Endothelial cell of umbilical vein (primary cell): ENCODE measurements at regions of chr4 and their contacts with region 1.

Region 1: GRCh38 chr4:139015269-139015947 is at the start of gene NOCT:
- DNase-seq: peak; percentile 88
- H3K4me3 ChIP-seq: peak within 1 kb of the TSS; percentile 90 to 100 (median 99)
- H3K27ac ChIP-seq: peak within 1 kb of the TSS; percentile 100
- H3K4me1 ChIP-seq: peaks cover 35% of the 10 kb centered on the region
- H3K27me3 ChIP-seq: no peaks in the 10 kb centered on the region
- CTCF ChIP-seq: peak in 1 of 2 donors; percentile 29
- POLR2A ChIP-seq: peak; percentile 90
- total RNA-seq, gene NOCT: 20.1 and 20.7 TPM in 2 replicates

Region 2: DNA sequence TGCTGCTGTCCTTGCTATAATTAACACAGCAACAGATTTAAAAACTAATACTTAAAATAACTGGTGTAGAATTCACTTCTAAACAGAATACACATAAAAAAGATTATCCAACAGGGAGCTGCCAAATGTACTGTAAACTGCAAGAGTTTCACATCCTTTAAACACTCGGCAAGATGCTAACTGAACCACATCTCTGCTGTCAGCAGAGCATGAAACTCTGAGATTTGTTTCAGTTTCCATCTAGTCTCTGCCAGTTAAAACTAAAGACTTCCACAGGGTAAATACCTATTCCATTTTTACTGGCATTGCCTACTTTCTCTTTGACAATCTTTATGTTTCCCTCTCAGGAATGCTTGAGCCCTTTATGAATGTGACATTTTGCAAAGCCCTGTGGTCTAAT is 901.0 kb before region 1 on chr4:
- CTCF ChIA-PET with region 1: no interaction called
- POLR2A ChIA-PET with region 1: no interaction called
- dilution Hi-C with region 1: no loop called
- intact Hi-C with region 1: loop called (anchors 10 kb)
- DNase-seq: peak; percentile 36
- H3K4me3 ChIP-seq: no peak overlapping the region
- H3K27ac ChIP-seq: peak overlapping the region; percentile 43
- H3K4me1 ChIP-seq: peaks cover 53% of the 10 kb centered on the region
- H3K27me3 ChIP-seq: no peaks in the 10 kb centered on the region
- CTCF ChIP-seq: no peak
- POLR2A ChIP-seq: no peak

Region 3: DNA sequence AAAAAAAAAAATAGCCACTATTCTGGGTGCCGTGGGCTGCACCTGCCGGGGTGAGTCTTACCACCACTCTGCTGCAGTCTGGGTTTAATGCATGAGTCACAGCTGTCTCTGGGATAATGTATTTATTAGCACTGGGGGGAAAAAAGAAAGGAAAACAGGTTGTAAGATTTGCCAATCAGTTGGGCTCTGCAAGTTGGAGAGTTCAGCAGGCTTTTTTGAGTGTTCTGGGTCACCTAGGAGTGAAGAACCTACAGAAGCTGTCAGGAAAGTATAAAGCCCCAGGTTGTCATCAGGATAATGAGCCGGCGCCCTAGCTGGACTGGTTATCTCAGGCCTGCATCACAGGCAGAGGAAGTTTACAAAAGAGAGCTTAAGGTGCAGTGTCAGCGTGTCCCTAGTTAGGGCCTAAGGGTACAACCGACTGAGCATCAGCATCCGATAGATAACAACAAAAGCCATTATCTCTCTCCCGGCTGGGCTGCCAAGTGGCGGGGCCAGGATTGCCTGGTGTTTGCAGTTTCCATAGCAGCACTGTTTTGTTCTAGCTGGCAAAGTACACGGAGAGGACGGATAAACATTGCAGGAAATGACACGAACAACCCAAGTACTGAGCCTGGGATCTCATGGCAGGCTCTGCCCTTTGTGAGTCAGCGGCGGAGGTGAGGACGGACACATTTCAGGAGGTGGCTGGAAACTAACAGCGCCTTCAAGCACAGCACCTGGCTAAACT is 104.6 kb before region 1 on chr4:
- CTCF ChIA-PET with region 1: no interaction called
- POLR2A ChIA-PET with region 1: no interaction called
- dilution Hi-C with region 1: no loop called
- intact Hi-C with region 1: loop called (anchors 1 kb)
- DNase-seq: peak; percentile 99
- H3K4me3 ChIP-seq: peak overlapping the region in 1 of 3 experiments; percentile 36
- H3K27ac ChIP-seq: peak overlapping the region; percentile 97
- H3K4me1 ChIP-seq: peaks cover 16% of the 10 kb centered on the region
- H3K27me3 ChIP-seq: no peaks in the 10 kb centered on the region
- CTCF ChIP-seq: no peak
- POLR2A ChIP-seq: no peak

Region 4: DNA sequence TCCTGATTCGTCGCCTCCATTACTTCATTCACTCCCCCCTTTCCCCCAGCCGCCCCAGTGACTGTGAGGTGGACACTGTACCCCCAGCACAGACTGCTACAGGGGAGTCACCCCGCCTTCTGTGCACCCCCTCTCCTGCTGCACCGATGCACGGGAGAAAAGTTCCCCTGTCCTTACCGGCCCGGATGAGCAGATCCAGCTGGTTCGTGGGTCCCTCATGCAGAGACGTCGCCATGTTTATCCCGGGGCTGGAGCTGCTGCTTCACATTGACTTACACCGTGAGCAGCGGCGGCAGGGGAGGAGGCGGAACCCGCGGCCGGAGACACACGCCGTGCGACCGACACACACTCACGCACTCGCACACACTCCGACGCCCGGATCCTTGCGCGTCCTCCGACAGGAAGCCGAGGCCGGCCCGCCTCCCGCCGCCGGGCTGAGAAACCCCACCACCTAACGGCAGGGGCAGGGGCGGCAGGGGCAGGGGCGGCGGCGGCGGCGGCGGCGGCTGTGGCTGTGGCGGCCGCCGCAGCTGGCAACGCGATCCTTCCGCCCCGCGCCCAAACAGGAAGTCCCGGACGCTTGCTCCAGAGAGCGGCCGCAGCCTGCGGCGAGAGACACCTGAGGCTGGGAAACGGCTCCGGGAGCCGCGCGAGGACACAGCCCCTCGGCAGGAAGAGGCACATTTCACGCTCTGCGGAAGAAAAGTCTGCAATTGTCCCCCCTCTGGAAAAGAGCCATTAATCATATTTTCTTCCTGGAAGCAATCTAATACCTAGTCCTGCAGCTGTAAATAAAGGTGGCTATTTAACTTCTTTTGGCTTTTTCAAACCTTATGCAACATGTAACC is 68.8 kb after region 1 on chr4:
- CTCF ChIA-PET with region 1: no interaction called
- POLR2A ChIA-PET with region 1: no interaction called
- dilution Hi-C with region 1: no loop called
- intact Hi-C with region 1: loop called (anchors 1 kb)
- DNase-seq: peak; percentile 91
- H3K4me3 ChIP-seq: peak overlapping the region; percentile 65 to 100 (median 92)
- H3K27ac ChIP-seq: peak overlapping the region; percentile 85
- H3K4me1 ChIP-seq: peaks cover 19% of the 10 kb centered on the region
- H3K27me3 ChIP-seq: no peaks in the 10 kb centered on the region
- CTCF ChIP-seq: peak in 1 of 2 donors; percentile 32
- POLR2A ChIP-seq: peak; percentile 36

Region 5: GRCh38 chr4:140095694-140096482 is 1080.5 kb after region 1 on chr4:
- CTCF ChIA-PET with region 1: no interaction called
- POLR2A ChIA-PET with region 1: no interaction called
- dilution Hi-C with region 1: no loop called
- intact Hi-C with region 1: loop called (anchors 10 kb)
- DNase-seq: peak; percentile 95
- H3K4me3 ChIP-seq: peak overlapping the region in 1 of 3 experiments; percentile 57
- H3K27ac ChIP-seq: peak overlapping the region; percentile 100
- H3K4me1 ChIP-seq: peaks cover 97% of the 10 kb centered on the region
- H3K27me3 ChIP-seq: no peaks in the 10 kb centered on the region
- CTCF ChIP-seq: no peak
- POLR2A ChIP-seq: peak; percentile 53